CD4-positive, alpha-beta memory T cell (primary cell): ENCODE measurements at regions of chr12 and their contacts with region 1.

Region 1: GRCh38 chr12:123232807-123233543 is at the starts of genes MPHOSPH9 and MTRFR:
- DNase-seq: peak; percentile 99 to 100 (median 100)
- H3K4me3 ChIP-seq: peak within 1 kb of the TSS; percentile 82 to 99
- H3K4me3 Mint-ChIP-seq: peak within 1 kb of the TSS; percentile 96 to 100 (median 99)
- H3K27ac ChIP-seq: peak within 1 kb of the TSS; percentile 88
- H3K27ac Mint-ChIP-seq: peak within 1 kb of the TSS; percentile 96 to 100 (median 99)
- H3K4me1 ChIP-seq: peaks cover 86% of the 10 kb centered on the region
- H3K4me1 Mint-ChIP-seq: peaks cover 40 to 81% (median 60%) of the 10 kb centered on the region in 4 donors
- H3K27me3 ChIP-seq: no peaks in the 10 kb centered on the region
- H3K27me3 Mint-ChIP-seq: no peaks in the 10 kb centered on the region
- total RNA-seq, gene MPHOSPH9: 57.9 to 62.7 TPM
- total RNA-seq, gene MTRFR: 46.1 to 48.8 TPM

Region 2: DNA sequence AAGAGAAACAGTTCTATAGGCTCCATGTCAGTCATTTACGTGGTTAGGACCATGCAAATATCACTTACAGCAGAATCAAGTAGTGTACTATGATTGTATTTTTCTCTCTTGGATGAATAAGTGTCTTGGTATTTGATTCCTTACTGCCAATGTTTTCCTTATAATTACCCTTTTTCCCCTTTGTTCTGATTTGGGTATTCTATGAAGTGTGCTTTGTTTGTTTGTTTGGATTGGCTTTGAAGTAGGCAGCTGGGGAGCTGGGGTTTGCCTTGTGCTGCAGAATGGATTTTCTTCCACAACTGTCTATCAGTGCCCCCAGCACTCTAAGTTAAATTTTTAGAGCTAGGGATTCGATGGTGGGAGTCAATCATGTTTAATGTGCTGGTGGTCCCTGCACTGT is 1508.0 kb before region 1 on chr12:
- CTCF ChIA-PET with region 1: no interaction called
- POLR2A ChIA-PET with region 1: no interaction called
- intact Hi-C with region 1: no loop called
- DNase-seq: no peak
- H3K4me3 ChIP-seq: no peak overlapping the region
- H3K4me3 Mint-ChIP-seq: no peak overlapping the region
- H3K27ac ChIP-seq: no peak overlapping the region
- H3K27ac Mint-ChIP-seq: no peak overlapping the region
- H3K4me1 ChIP-seq: no peaks in the 10 kb centered on the region
- H3K4me1 Mint-ChIP-seq: no peaks in the 10 kb centered on the region
- H3K27me3 ChIP-seq: no peaks in the 10 kb centered on the region
- H3K27me3 Mint-ChIP-seq: no peaks in the 10 kb centered on the region

Region 3: GRCh38 chr12:122834104-122834920 is 398.7 kb before region 1 on chr12:
- CTCF ChIA-PET with region 1: no interaction called
- POLR2A ChIA-PET with region 1: interaction called, 13 read pairs
- intact Hi-C with region 1: loop called (anchors 5 kb)
- DNase-seq: peak in 4 of 5 donors; percentile 21 to 31 (median 26)
- H3K4me3 ChIP-seq: peak overlapping the region; percentile 23 to 63
- H3K4me3 Mint-ChIP-seq: peak overlapping the region; percentile 91 to 96 (median 94)
- H3K27ac ChIP-seq: no peak overlapping the region
- H3K27ac Mint-ChIP-seq: peak overlapping the region; percentile 84 to 97 (median 93)
- H3K4me1 ChIP-seq: peaks cover 30% of the 10 kb centered on the region
- H3K4me1 Mint-ChIP-seq: peaks cover 24 to 45% (median 38%) of the 10 kb centered on the region in 4 donors
- H3K27me3 ChIP-seq: no peaks in the 10 kb centered on the region
- H3K27me3 Mint-ChIP-seq: no peaks in the 10 kb centered on the region

Region 4: GRCh38 chr12:122974274-122974891 is 258.6 kb before region 1 on chr12:
- CTCF ChIA-PET with region 1: interaction called, 13 read pairs
- POLR2A ChIA-PET with region 1: interaction called, 67 read pairs
- intact Hi-C with region 1: loop called (anchors 1 kb)
- DNase-seq: peak; percentile 97 to 99 (median 98)
- H3K4me3 ChIP-seq: peak overlapping the region; percentile 71 to 100
- H3K4me3 Mint-ChIP-seq: peak overlapping the region; percentile 89 to 99 (median 98)
- H3K27ac ChIP-seq: peak overlapping the region; percentile 98
- H3K27ac Mint-ChIP-seq: peak overlapping the region; percentile 98 to 100 (median 99)
- H3K4me1 ChIP-seq: peaks cover 41% of the 10 kb centered on the region
- H3K4me1 Mint-ChIP-seq: peaks cover 10 to 49% (median 30%) of the 10 kb centered on the region in 4 donors
- H3K27me3 ChIP-seq: no peaks in the 10 kb centered on the region
- H3K27me3 Mint-ChIP-seq: no peaks in the 10 kb centered on the region

Region 5: DNA sequence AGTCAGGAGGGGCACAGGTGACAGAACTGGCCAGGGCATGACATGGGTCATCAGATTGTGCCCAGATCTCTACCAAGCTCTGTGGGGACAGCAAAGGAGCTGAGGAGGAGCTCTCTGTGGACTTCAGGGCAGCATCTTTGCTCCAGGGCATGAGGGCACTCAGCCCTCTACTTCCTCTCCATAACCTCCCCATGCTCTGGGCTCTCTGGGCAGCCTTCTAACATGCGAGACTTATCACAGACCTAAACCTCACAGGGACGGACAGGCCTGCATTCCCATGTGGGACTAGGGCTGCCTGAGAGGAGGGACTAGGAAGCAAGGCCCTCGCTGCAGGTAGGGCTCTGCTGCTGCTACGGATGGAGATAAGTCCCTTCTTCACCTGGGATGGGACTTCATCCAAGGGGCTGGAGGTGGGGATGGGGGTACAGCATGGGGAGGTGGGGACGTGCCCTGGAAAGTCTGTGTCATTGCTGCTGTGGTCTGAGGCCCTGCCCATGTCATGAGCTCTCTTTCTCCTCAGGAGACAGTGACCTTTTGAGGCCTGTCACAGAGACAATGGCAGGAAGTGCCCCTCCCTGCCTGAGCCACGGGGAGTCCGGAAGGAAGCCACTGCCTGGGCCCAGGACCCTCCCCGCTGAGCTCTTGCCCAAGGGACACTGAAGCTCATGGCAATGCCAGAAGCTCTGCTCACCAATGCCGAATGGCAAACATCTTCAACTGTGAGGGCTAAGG is 126.2 kb before region 1 on chr12:
- CTCF ChIA-PET with region 1: interaction called, 7 read pairs
- POLR2A ChIA-PET with region 1: interaction called, 17 read pairs
- intact Hi-C with region 1: no loop called
- DNase-seq: peak; percentile 37 to 64 (median 48)
- H3K4me3 ChIP-seq: peak overlapping the region in 1 of 2 donors; percentile 14
- H3K4me3 Mint-ChIP-seq: peak overlapping the region; percentile 67 to 83 (median 75)
- H3K27ac ChIP-seq: peak overlapping the region; percentile 54
- H3K27ac Mint-ChIP-seq: peak overlapping the region; percentile 82 to 96 (median 95)
- H3K4me1 ChIP-seq: peaks cover 33% of the 10 kb centered on the region
- H3K4me1 Mint-ChIP-seq: peaks cover 31 to 54% (median 39%) of the 10 kb centered on the region in 4 donors
- H3K27me3 ChIP-seq: no peaks in the 10 kb centered on the region
- H3K27me3 Mint-ChIP-seq: no peaks in the 10 kb centered on the region

Region 6: DNA sequence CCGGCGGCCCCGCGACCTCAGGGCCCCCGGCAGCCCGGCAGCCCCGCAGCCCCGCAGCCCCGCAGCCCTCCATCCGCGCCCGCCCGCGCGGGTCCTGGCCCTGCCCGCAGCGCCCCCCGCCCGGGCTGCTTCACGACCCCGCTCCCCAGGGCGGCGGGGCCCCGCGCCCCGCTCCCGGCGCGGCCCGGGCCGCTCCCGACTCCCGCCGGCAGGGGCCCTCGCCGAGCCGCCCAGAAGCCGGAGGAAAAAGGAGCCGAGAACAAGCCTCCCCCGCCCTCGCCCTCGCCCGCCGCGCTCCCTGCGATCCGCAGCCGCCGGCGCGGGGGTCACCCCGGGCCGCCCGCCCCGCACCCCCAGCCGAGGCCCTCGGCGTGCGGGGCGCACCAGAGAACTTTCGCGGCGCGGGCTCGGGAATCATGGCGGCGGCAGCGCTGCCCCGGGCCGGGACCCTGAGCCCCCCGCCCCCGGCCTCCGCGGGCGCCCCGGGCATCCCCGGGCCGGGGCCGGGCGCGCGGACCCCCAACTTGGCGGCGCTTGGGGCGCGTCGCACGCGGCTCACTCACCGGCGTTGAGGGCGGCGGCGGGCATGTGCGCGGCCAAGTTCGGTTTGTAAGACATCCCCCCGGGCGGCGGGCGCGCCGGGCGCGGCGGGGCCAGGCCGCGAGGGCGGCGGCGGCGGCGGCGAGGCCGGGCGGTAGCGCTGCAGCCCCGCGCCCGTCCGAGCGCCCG is 38.2 kb after region 1 on chr12:
- CTCF ChIA-PET with region 1: interaction called, 4 read pairs
- POLR2A ChIA-PET with region 1: interaction called, 13 read pairs
- intact Hi-C with region 1: no loop called
- DNase-seq: peak; percentile 70 to 74 (median 71)
- H3K4me3 ChIP-seq: peak overlapping the region in 1 of 2 donors; percentile 27
- H3K4me3 Mint-ChIP-seq: no peak overlapping the region
- H3K27ac ChIP-seq: no peak overlapping the region
- H3K27ac Mint-ChIP-seq: no peak overlapping the region
- H3K4me1 ChIP-seq: peaks cover 15% of the 10 kb centered on the region
- H3K4me1 Mint-ChIP-seq: peaks cover 10 to 32% (median 15%) of the 10 kb centered on the region in 4 donors
- H3K27me3 ChIP-seq: no peaks in the 10 kb centered on the region
- H3K27me3 Mint-ChIP-seq: no peaks in the 10 kb centered on the region

Region 7: DNA sequence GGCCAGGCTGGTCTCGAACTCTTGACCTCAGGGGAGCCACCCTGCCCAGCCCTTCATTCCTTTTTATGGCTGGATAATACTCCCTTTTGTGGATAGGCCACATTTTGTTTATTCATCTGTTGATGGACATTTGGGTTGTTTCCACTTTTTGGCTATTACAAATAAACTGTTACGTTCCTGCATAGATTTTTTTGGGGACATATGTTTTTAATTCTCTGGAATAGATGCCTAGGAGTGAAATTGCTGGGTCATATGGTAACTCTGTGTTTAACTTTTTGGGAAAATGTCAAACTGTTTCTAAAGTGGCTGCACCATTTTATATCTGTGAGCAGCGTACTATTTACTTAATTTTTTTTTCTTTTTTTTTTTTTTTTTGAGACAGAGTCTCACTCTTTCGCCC is 160.8 kb after region 1 on chr12:
- CTCF ChIA-PET with region 1: no interaction called
- POLR2A ChIA-PET with region 1: no interaction called
- intact Hi-C with region 1: no loop called
- DNase-seq: no peak
- H3K4me3 ChIP-seq: no peak overlapping the region
- H3K4me3 Mint-ChIP-seq: no peak overlapping the region
- H3K27ac ChIP-seq: no peak overlapping the region
- H3K27ac Mint-ChIP-seq: no peak overlapping the region
- H3K4me1 ChIP-seq: peaks cover 25% of the 10 kb centered on the region
- H3K4me1 Mint-ChIP-seq: peaks cover 15 to 43% (median 24%) of the 10 kb centered on the region in 4 donors
- H3K27me3 ChIP-seq: no peaks in the 10 kb centered on the region
- H3K27me3 Mint-ChIP-seq: no peaks in the 10 kb centered on the region

Region 8: DNA sequence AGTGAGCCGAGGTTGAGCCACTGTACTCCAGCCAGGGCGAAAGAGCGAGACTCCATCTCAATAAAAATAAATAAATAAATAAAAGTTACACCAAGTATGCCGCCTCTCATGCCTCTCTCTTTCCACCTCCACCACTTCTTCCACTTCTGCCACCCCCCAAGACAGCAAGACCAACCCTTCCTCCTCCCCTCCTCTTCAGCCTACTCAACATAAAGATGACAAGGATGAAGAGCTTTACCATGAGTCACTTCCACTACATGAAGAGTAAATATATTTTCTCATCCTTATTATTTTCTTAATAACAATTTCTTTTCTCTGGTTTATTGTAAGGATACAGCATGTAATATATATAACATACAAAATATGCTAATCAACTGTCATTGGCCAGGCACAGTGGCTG is 347.8 kb after region 1 on chr12:
- CTCF ChIA-PET with region 1: interaction called, 6 read pairs
- POLR2A ChIA-PET with region 1: no interaction called
- intact Hi-C with region 1: loop called (anchors 1 kb)
- DNase-seq: no peak
- H3K4me3 ChIP-seq: no peak overlapping the region
- H3K4me3 Mint-ChIP-seq: peak overlapping the region in 1 of 8 donors; percentile 31
- H3K27ac ChIP-seq: no peak overlapping the region
- H3K27ac Mint-ChIP-seq: peak overlapping the region in 2 of 7 donors; percentile 48 to 97
- H3K4me1 ChIP-seq: peaks cover 26% of the 10 kb centered on the region
- H3K4me1 Mint-ChIP-seq: peaks cover 13 to 44% (median 26%) of the 10 kb centered on the region in 4 donors
- H3K27me3 ChIP-seq: no peaks in the 10 kb centered on the region
- H3K27me3 Mint-ChIP-seq: no peaks in the 10 kb centered on the region

Region 9: GRCh38 chr12:124927201-124928094 is 1694.5 kb after region 1 on chr12:
- CTCF ChIA-PET with region 1: no interaction called
- POLR2A ChIA-PET with region 1: no interaction called
- intact Hi-C with region 1: no loop called
- DNase-seq: peak; percentile 90 to 94 (median 92)
- H3K4me3 ChIP-seq: peak overlapping the region; percentile 70 to 95
- H3K4me3 Mint-ChIP-seq: peak overlapping the region; percentile 88 to 97 (median 95)
- H3K27ac ChIP-seq: peak overlapping the region; percentile 57
- H3K27ac Mint-ChIP-seq: peak overlapping the region; percentile 91 to 100 (median 99)
- H3K4me1 ChIP-seq: peaks cover 21% of the 10 kb centered on the region
- H3K4me1 Mint-ChIP-seq: peaks cover 18 to 45% (median 29%) of the 10 kb centered on the region in 4 donors
- H3K27me3 ChIP-seq: no peaks in the 10 kb centered on the region
- H3K27me3 Mint-ChIP-seq: peaks cover 4 to 9% of the 10 kb centered on the region in 2 donors